A549 (cell line): ENCODE measurements at regions of chr1 and their contacts with region 1.

Region 1: GRCh38 chr1:152459596-152460528 is 45.8 kb upstream of the CRNN start:
- DNase-seq: peak; percentile 39 to 83
- ATAC-seq: peak; percentile 61 to 86; a peak in 4 of 6 replicates
- H3K4me3 ChIP-seq: no peak overlapping the region
- H3K27ac ChIP-seq: peak overlapping the region in 1 of 2 experiments; percentile 15; a peak in 1 of 6 replicates
- H3K4me1 ChIP-seq: no peaks in the 10 kb centered on the region
- CTCF ChIP-seq: peak; percentile 69
- EP300 ChIP-seq: no peak
- POLR2A ChIP-seq: no peak
- RAD21 ChIP-seq: no peak; a peak in 1 of 5 replicates

Region 2: GRCh38 chr1:151934048-151934493 is 525.8 kb before region 1 on chr1:
- CTCF ChIA-PET with region 1: interaction called, 10 read pairs
- POLR2A ChIA-PET with region 1: no interaction called
- DNase-seq: peak; percentile 54 to 76
- ATAC-seq: peak; percentile 94 to 97
- H3K4me3 ChIP-seq: no peak overlapping the region
- H3K27ac ChIP-seq: peak overlapping the region in 1 of 2 experiments; percentile 43; a peak in 1 of 6 replicates
- H3K4me1 ChIP-seq: peaks cover 33% of the 10 kb centered on the region
- CTCF ChIP-seq: peak; percentile 98
- EP300 ChIP-seq: no peak
- POLR2A ChIP-seq: no peak
- RAD21 ChIP-seq: peak; percentile 98 to 99

Region 3: GRCh38 chr1:152110860-152111514 is 348.9 kb before region 1 on chr1:
- CTCF ChIA-PET with region 1: interaction called, 12 read pairs
- POLR2A ChIA-PET with region 1: no interaction called
- DNase-seq: peak; percentile 24 to 72
- ATAC-seq: peak; percentile 45 to 72
- H3K4me3 ChIP-seq: peak overlapping the region; percentile 49
- H3K27ac ChIP-seq: peak overlapping the region in 1 of 2 experiments; percentile 67; a peak in 3 of 6 replicates
- H3K4me1 ChIP-seq: peaks cover 28% of the 10 kb centered on the region
- CTCF ChIP-seq: no peak
- EP300 ChIP-seq: no peak
- POLR2A ChIP-seq: no peak
- RAD21 ChIP-seq: no peak

Region 4: GRCh38 chr1:152179566-152179965 is 280.3 kb before region 1 on chr1:
- CTCF ChIA-PET with region 1: interaction called, 161 read pairs
- POLR2A ChIA-PET with region 1: no interaction called
- DNase-seq: no peak
- ATAC-seq: no peak; a peak in 1 of 6 replicates
- H3K4me3 ChIP-seq: no peak overlapping the region
- H3K27ac ChIP-seq: no peak overlapping the region
- H3K4me1 ChIP-seq: peaks cover 14% of the 10 kb centered on the region
- CTCF ChIP-seq: no peak
- EP300 ChIP-seq: no peak
- POLR2A ChIP-seq: no peak
- RAD21 ChIP-seq: no peak

Region 5: GRCh38 chr1:152415454-152416227 is 44.2 kb before region 1 on chr1:
- CTCF ChIA-PET with region 1: interaction called, 21 read pairs
- POLR2A ChIA-PET with region 1: no interaction called
- DNase-seq: no peak
- ATAC-seq: no peak
- H3K4me3 ChIP-seq: no peak overlapping the region
- H3K27ac ChIP-seq: no peak overlapping the region
- H3K4me1 ChIP-seq: no peaks in the 10 kb centered on the region
- CTCF ChIP-seq: no peak
- EP300 ChIP-seq: no peak
- POLR2A ChIP-seq: no peak
- RAD21 ChIP-seq: no peak

Region 6: DNA sequence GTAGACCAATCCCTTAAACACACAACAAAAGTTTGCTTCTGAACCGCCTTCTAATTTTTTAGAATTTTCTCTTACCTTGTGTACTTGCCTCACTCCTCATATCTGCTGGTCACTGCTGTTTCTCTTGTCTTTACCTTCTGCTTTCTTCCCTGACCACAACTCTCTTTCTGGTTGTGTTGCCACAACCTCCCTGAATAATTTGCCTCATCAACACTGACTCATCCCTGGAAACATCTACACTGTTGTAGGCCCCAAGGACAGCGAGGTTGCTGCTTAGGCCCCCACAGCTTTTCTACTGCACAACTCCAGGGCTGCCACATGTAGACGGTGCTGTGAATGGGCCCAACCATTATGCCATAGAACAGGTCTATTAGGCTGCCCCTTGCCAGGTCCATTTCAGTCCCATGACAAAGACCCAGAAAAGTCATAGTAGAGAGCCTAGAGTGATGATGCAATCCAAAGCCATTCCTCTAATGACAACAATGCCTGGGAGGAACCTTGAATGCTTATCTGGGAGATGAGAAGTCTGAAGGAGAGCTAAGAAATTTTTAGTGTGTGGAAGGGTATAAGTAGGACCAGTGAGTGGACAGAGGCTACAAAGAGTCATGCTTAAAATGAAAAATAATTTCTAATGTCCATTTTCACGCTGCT is 14.2 kb after region 1 on chr1:
- CTCF ChIA-PET with region 1: interaction called, 30 read pairs
- POLR2A ChIA-PET with region 1: no interaction called
- DNase-seq: no peak
- ATAC-seq: no peak
- H3K4me3 ChIP-seq: no peak overlapping the region
- H3K27ac ChIP-seq: no peak overlapping the region
- H3K4me1 ChIP-seq: no peaks in the 10 kb centered on the region
- CTCF ChIP-seq: no peak
- EP300 ChIP-seq: no peak
- POLR2A ChIP-seq: no peak
- RAD21 ChIP-seq: no peak

Region 7: DNA sequence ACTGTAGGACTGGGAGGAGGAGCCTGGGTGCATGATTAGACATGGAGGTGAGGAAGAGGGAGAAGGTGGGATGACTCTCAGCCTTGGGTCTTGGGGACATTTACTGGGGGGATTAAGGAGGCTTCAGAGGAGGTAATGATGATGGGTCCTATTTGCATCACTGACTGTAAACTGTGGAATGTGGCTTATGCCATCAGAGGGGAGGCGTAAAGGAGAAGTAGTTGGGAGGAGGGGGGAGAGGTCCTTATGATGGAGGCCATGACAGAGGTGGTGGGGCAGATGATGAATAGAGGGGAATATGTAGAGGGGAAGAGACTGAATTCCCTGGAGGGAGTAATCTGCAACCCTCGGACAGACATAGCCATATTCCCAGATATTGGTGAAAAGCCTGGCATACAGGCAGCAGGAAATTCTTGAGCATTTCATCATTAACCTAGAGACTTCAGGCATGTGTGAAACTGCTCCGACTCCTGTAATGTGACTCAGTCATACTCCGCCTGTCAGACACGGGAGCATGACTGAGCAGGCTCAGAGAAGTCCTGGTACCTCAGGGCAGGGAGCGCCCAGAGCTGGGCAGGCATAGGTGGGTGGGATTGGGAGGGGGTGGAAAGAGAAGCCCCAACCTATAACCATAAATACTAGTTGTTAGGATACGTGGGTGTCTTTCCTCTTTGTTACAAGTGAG is 42.8 kb after region 1 on chr1:
- CTCF ChIA-PET with region 1: interaction called, 22 read pairs
- POLR2A ChIA-PET with region 1: no interaction called
- DNase-seq: peak; percentile 43 to 84
- ATAC-seq: peak; percentile 71 to 78
- H3K4me3 ChIP-seq: no peak overlapping the region
- H3K27ac ChIP-seq: peak overlapping the region; percentile 90 to 92
- H3K4me1 ChIP-seq: peaks cover 67% of the 10 kb centered on the region
- CTCF ChIP-seq: no peak
- EP300 ChIP-seq: peak; percentile 16 to 63; a peak in 3 of 5 replicates
- POLR2A ChIP-seq: no peak
- RAD21 ChIP-seq: no peak